Activated naive CD4-positive, alpha-beta T cell treated with anti-CD3 and anti-CD28 coated beads for 36 hours (primary cell): ENCODE measurements at regions of chr9 and their contacts with region 1.

Region 1: GRCh38 chr9:92669890-92670708 is at the start of gene IPPK:
- DNase-seq: peak; percentile 98
- H3K4me3 Mint-ChIP-seq: peak within 1 kb of the TSS; percentile 93
- H3K27ac Mint-ChIP-seq: peak within 1 kb of the TSS; percentile 90
- H3K4me1 Mint-ChIP-seq: peaks cover 26% of the 10 kb centered on the region
- H3K27me3 Mint-ChIP-seq: no peaks in the 10 kb centered on the region
- total RNA-seq, gene IPPK: 7.6 to 8.2 TPM

Region 2: DNA sequence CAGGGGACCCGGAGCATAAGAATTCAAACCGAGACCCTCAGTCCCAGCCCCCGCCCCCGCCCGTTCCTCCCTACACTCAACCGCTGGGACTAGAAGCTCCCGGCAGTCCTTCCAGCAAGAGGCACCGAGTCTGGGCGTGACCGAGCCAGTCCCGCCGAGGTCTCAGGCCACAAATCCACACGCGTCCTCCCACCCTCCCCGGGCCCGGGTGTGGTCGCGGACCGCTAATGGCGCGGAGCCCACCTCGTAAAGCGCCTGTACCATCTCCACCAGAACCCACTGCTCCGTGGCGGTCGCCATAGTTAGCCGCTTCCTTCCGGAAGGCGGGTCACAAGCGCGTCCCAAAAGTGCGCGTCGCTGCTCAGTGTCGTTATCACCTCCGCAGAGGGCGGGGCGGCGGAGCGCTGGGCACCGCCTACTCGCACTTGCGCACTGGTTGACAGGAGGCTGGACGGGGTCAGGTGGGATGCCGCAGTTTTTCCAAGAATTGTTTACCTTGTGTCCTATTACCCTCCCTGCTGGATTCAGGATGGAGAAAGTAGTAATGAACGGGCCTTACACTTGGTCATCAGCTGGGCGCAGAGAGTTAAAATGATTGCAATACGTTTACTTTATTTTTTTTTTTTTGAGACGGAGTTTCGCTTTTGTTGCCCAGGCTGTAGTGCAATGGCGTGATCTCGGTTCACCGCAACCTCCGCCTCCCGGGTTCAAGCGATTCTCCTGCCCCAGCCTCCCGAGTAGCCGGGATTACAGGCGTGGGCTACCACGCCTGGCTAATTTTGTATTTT is 554.8 kb before region 1 on chr9 and contains the start of gene SPTLC1:
- CTCF ChIA-PET with region 1: no interaction called
- intact Hi-C with region 1: loop called (anchors 1 kb)
- DNase-seq: peak; percentile 95
- H3K4me3 Mint-ChIP-seq: peak within 1 kb of the TSS; percentile 96
- H3K27ac Mint-ChIP-seq: peak within 1 kb of the TSS; percentile 97
- H3K4me1 Mint-ChIP-seq: peaks cover 25% of the 10 kb centered on the region
- H3K27me3 Mint-ChIP-seq: no peaks in the 10 kb centered on the region
- total RNA-seq, gene SPTLC1: 32.0 to 38.4 TPM

Region 3: DNA sequence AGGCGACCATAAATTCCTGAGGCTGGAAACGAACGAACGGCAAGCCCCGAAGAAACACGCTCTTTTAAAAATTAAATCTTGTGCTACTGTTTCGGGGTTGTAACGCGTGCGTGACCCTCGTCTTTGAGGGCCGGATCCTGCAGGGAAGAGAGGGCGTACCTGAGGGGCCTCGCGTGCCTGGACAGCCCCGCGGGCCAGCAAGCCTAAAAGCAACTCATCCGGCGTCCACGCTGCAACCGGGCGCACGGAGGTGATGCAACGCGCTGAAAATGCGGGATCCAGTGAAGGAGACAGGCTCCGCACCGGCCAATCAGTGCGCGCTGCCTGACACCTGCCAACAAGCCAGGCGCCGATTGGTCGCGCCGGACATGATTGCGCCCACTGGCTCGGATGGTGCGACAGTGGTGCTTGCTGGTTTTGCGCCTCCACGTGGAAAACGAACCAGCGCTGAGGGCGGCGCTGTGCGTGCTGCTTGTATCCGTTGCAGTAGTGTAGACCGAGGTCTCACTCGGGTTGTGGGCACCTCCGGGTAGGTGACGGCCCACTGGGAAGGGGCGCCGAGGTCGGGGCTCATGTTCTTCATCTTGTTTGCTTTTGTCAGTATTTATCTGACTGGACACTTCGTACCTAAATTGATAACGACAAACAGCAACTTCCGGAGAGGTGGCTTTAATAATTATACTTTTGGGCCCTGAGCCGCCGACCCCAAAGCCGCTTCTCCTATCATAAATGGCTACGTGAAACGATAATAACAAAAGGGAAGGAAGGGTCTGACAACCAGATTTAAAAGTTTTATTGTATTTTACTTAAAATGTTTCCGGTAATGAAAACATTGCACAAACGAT is 376.4 kb before region 1 on chr9 and contains the start of gene IARS1:
- CTCF ChIA-PET with region 1: no interaction called
- intact Hi-C with region 1: loop called (anchors 1 kb)
- DNase-seq: peak; percentile 100
- H3K4me3 Mint-ChIP-seq: peak within 1 kb of the TSS; percentile 95
- H3K27ac Mint-ChIP-seq: peak within 1 kb of the TSS; percentile 97
- H3K4me1 Mint-ChIP-seq: peaks cover 49% of the 10 kb centered on the region
- H3K27me3 Mint-ChIP-seq: no peaks in the 10 kb centered on the region
- total RNA-seq, gene IARS1: 271 to 272 TPM

Region 4: DNA sequence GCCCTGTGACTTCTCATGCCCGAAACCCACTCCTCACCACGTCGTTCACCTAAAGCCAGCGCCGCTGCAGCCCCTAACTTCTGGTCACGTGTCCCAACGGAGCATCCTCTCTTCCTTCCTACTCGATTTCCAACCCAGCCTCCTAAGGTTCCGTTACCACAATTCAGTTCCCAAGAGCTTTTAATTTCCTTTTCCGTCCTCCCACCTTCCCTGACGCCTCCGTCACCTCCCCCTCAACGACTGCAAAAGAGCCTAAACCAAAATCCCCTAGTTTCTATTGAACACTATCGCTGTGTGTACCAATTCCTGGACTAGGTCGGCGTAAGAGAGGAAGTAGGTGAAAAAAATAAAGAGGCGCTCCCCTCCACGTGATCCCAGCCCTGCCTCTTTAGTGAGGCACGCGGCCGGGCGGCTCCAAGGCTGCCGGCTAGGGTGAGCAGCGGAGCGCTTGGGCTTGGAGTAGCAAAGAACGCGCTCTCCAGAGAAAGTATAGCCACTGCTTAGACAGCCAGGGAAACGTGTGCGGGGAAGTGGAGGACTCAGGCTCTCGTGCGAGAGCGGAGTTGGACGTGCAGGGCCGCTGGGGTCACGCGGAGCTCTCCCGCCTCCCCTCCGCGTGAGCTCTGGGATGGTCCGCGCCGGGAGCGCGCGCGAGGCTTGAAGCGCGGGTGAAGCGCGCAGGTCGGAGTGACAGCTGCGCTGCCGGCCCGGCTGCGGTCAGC is 344.7 kb before region 1 on chr9 and contains the starts of genes CENPP and NOL8:
- CTCF ChIA-PET with region 1: no interaction called
- intact Hi-C with region 1: loop called (anchors 1 kb)
- DNase-seq: peak; percentile 88
- H3K4me3 Mint-ChIP-seq: peak within 1 kb of the TSS; percentile 99
- H3K27ac Mint-ChIP-seq: peak within 1 kb of the TSS; percentile 97
- H3K4me1 Mint-ChIP-seq: peaks cover 41% of the 10 kb centered on the region
- H3K27me3 Mint-ChIP-seq: no peaks in the 10 kb centered on the region
- total RNA-seq, gene CENPP: 24.9 to 26.5 TPM
- total RNA-seq, gene NOL8: 41.0 to 46.2 TPM

Region 5: DNA sequence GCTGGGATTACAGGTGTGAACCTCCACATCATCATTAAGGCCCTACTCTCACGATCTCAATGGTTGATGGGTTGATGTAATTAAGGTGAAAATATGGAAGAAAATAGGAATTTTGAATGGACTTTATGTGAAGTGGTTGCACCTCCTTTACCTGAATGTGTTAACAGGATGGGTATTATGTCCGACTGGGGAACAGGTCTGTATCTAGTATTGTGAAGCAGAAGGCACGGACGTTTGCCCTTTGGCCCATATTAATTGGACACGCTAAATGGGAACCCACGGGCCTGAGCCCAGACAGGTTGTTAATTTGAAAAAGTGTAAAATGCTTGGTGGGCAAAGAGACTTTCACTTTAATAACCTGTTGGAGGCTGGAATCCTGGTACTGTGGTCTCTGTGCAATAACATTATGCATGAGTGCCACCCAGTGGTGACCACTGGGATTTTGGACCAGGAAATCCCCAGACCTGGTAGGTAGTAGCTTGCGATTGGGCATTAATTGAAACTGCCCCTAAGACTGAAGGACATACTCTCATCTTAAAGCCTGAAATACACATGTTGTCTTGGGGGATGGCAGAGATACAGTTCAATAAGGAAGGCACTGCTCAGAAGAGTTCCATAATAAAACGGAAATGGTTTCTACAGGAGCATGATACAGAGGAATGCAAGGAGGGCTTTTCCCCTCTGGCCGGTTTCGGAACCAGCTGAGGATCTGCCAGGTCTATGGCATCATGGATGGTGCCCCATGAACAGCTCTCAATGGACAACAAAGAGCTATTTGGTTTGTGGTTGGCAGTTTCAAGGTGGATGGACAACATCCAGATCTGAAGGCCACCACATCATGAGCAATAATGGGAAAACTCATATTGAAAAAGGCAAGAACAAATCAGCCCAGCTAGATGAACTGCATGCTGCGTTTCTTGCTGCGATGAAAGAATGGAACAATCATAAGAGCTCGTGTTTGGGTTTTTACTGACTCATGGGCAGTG is 120.7 kb after region 1 on chr9:
- CTCF ChIA-PET with region 1: interaction called, 9 read pairs
- intact Hi-C with region 1: loop called (anchors 2 kb)
- DNase-seq: peak; percentile 85
- H3K4me3 Mint-ChIP-seq: no peak overlapping the region
- H3K27ac Mint-ChIP-seq: no peak overlapping the region
- H3K4me1 Mint-ChIP-seq: peaks cover 3% of the 10 kb centered on the region
- H3K27me3 Mint-ChIP-seq: no peaks in the 10 kb centered on the region

Region 6: GRCh38 chr9:92877531-92878430 is 207.7 kb after region 1 on chr9 and contains the start of gene ZNF484:
- CTCF ChIA-PET with region 1: no interaction called
- intact Hi-C with region 1: loop called (anchors 1 kb)
- DNase-seq: peak; percentile 99
- H3K4me3 Mint-ChIP-seq: peak within 1 kb of the TSS; percentile 87
- H3K27ac Mint-ChIP-seq: peak within 1 kb of the TSS; percentile 94
- H3K4me1 Mint-ChIP-seq: peaks cover 40% of the 10 kb centered on the region
- H3K27me3 Mint-ChIP-seq: no peaks in the 10 kb centered on the region
- total RNA-seq, gene ZNF484: 5.8 to 6.5 TPM